ENCODE measurements at regions of chr5 and their contacts with region 1.

Region 1: GRCh38 chr5:138575194-138576015 is at the start of gene HSPA9:
- DNase-seq: peak; percentile 98
- ATAC-seq: peak; percentile 98
- total RNA-seq, gene HSPA9: 308 TPM

Region 2: DNA sequence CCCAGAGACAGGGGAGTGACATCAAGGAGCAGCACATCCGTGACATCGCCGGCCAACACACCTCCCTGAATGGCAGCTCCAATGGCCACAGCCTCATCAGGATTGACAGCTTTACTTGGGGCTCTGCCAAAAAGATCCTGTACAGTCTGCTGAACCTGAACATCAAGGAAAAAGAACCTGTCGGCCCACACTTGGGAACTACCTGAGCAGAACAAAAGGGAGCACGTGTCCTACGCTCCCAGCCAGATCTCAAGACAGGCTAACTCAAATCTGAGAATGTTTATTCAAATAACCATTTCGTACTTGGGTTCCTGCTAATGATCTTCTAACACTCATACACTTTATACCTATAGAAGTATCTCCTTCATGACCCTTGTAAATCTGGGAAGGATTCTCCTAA is 15.5 kb before region 1 on chr5:
- intact Hi-C with region 1: no loop called
- DNase-seq: no peak
- ATAC-seq: no peak

Region 3: GRCh38 chr5:139341650-139342422 is 766.4 kb after region 1 on chr5 and contains the start of gene PAIP2:
- intact Hi-C with region 1: loop called (anchors 5 kb)
- DNase-seq: peak; percentile 100
- ATAC-seq: peak; percentile 97
- total RNA-seq, gene PAIP2: 144 TPM

Measured in Right ventricle myocardium inferior (tissue), 1 donor.